Activated T-helper 2 cell treated with anti-CD3 and anti-CD28 coated beads, Interferon-gamma antibody, Interleukin-2, Interleukin-4, amounts not matched to agents 10 μg/mL and 5 μg/mL and 100 μg/mL, durations not matched to agents 14 hours and 24 hours and 36 hours (primary cell): ENCODE measurements at regions of chr16 and their contacts with region 1.

Region 1: DNA sequence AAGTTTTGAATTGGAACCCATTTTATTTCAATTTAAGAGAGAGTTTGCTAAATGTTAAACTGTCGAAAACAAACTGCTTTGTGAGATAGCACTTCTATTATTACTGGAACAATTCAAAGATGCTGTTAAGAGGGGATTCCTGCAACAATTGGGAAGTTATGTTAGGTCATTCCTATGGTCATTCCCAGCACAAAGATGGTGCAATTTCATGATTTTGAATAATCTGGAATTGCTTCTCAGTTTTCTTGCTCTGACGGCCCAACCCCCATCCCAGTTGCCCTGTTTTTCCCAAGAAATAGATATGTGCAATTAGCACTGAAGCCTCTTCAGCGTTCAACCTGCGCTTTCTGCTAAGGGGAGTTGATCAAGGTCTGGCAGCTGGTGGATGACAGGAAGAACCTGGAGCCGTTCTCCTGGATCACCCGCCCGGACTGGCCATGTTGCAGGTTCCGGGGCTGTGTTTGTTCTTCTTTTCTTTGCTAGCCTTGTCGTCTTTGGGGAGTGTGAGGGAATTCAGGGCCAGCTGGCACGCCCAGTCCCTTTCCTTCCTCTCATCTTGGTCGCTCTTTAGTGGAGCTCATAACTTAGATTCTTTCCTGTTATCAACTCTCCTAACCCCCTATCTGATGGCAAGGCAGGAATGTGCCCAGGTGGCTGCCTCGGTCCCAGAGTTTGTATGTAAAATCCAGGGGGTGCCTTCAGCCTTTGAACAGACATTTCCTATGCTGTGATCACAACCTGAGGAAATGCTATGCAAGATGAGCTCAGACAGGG is 29.0 kb upstream of the IRF8 start:
- DNase-seq: no peak
- H3K4me3 Mint-ChIP-seq: no peak overlapping the region
- H3K27ac Mint-ChIP-seq: no peak overlapping the region
- H3K4me1 Mint-ChIP-seq: peaks cover 26% of the 10 kb centered on the region
- H3K27me3 Mint-ChIP-seq: peaks cover 45% of the 10 kb centered on the region

Region 2: DNA sequence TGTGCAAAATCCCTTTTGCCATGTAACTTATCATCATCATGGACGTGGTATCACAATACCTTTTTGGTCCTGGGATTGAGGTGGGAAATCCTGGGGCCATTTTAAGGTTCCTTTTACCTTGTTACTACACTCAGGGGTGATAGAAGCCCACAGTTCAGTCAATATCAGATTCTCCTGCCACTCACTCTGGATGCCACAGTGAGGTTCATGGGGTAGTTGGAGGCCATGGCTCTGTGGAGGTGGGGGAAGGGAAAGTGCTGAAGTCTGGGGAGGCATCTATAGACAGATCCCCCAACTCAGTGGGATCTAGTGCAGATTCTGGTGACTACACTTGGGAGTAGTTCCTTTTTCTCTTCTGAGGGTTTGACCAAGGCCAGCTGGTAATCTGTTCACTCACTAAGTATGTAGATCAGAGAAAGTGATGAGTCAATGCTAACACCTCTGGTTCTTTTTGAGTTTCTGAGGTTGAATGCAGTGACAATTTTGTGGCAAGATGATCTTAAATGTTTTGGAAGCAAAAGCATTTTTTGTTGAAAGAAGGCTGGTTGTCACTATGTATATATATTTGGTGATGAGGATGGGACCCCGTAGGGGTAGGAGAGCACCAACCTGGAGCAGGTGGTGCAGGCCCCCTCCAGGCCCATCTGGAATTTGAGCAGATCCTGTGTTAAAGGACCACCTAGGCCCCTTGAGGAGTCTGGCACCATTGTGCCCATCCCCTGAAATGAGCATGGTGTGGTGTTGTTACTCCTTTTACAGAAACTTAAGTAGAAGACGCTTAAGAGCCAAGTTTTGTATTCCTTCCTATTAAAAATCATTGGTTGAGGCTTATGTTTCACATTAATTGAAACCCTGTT is 10.2 kb after region 1 on chr16:
- intact Hi-C with region 1: loop called (anchors 1 kb)
- DNase-seq: no peak
- H3K4me3 Mint-ChIP-seq: no peak overlapping the region
- H3K27ac Mint-ChIP-seq: no peak overlapping the region
- H3K4me1 Mint-ChIP-seq: peaks cover 32% of the 10 kb centered on the region
- H3K27me3 Mint-ChIP-seq: peaks cover 61% of the 10 kb centered on the region

Region 3: DNA sequence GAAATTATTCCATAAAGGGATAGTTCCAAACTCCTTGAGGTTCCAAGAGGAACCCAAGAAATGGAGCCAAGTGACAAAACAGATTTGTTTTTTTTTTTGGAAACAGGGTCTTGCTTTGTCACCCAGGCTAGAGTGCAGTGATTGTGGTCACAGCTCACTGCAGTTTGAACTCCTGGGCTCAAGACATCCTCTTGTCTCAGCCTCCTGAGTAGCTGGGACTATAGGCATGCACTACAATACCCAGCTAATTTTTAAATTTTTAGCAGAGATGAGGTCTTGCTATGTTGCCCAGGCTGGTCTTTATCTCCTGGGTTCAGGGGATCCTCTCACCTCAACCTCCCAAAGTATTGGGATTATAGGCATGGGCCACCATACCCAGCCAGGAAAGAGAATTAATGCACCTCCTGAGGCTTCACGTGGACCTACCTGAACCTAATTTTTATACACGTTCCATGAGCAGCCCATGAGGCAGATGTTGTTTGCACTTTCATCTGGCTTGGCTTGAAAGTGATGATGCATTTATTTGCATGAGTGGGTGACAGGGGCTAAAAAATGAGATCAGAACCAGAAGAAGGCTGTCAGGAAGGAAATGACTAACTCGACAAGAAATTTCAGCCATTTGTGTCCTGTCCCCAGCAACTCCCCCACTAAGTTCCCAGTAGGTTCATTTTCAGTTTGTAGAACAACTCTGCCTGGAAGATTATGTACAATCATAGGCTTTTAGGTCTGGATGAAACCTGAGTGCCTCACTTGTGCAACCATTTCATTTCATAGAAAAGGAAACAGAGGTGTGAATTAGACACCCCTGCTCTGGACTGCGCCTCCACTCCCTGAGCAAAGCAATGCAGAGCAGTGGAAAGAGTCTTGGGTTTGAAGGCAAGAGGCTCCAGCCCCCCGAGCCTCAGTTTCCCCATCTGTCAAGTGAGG is 18.7 kb after region 1 on chr16:
- intact Hi-C with region 1: loop called (anchors 1 kb)
- DNase-seq: no peak
- H3K4me3 Mint-ChIP-seq: no peak overlapping the region
- H3K27ac Mint-ChIP-seq: peak overlapping the region; percentile 48
- H3K4me1 Mint-ChIP-seq: peaks cover 36% of the 10 kb centered on the region
- H3K27me3 Mint-ChIP-seq: peaks cover 38% of the 10 kb centered on the region